ENCODE measurements at regions of chr1 and their contacts with region 1.

Region 1: GRCh38 chr1:229848752-229849677 is 218.0 kb upstream of the GALNT2 start:
- DNase-seq: peak; percentile 28
- ATAC-seq: peak; percentile 41
- H3K4me3 ChIP-seq: no peak overlapping the region
- H3K4me3 Mint-ChIP-seq: no peak overlapping the region
- H3K27ac ChIP-seq: no peak overlapping the region
- H3K27ac Mint-ChIP-seq: no peak overlapping the region
- H3K4me1 ChIP-seq: peaks cover 20 to 24% of the 10 kb centered on the region in 2 donors
- H3K4me1 Mint-ChIP-seq: peaks cover 23% of the 10 kb centered on the region
- H3K27me3 ChIP-seq: no peaks in the 10 kb centered on the region
- H3K27me3 Mint-ChIP-seq: no peaks in the 10 kb centered on the region
- CTCF ChIP-seq: peak; percentile 42

Region 2: GRCh38 chr1:229836324-229836723 is 12.7 kb before region 1 on chr1:
- CTCF ChIA-PET with region 1: interaction called, 10 read pairs
- POLR2A ChIA-PET with region 1: no interaction called
- intact Hi-C with region 1: no loop called
- DNase-seq: no peak
- ATAC-seq: no peak
- H3K4me3 ChIP-seq: no peak overlapping the region
- H3K4me3 Mint-ChIP-seq: no peak overlapping the region
- H3K27ac ChIP-seq: no peak overlapping the region
- H3K27ac Mint-ChIP-seq: no peak overlapping the region
- H3K4me1 ChIP-seq: peaks cover 2 to 9% of the 10 kb centered on the region in 2 donors
- H3K4me1 Mint-ChIP-seq: peaks cover 5% of the 10 kb centered on the region
- H3K27me3 ChIP-seq: peaks cover 0 to 7% (median 0%) of the 10 kb centered on the region in 4 experiments
- H3K27me3 Mint-ChIP-seq: peaks cover 14% of the 10 kb centered on the region
- CTCF ChIP-seq: no peak

Region 3: GRCh38 chr1:230191079-230191804 is 342.2 kb after region 1 on chr1:
- CTCF ChIA-PET with region 1: no interaction called
- POLR2A ChIA-PET with region 1: no interaction called
- intact Hi-C with region 1: no loop called
- DNase-seq: peak; percentile 41
- ATAC-seq: peak; percentile 62
- H3K4me3 ChIP-seq: no peak overlapping the region
- H3K4me3 Mint-ChIP-seq: no peak overlapping the region
- H3K27ac ChIP-seq: peak overlapping the region in 1 of 2 donors; percentile 50
- H3K27ac Mint-ChIP-seq: peak overlapping the region; percentile 27
- H3K4me1 ChIP-seq: peaks cover 22 to 24% of the 10 kb centered on the region in 2 donors
- H3K4me1 Mint-ChIP-seq: peaks cover 35% of the 10 kb centered on the region
- H3K27me3 ChIP-seq: no peaks in the 10 kb centered on the region
- H3K27me3 Mint-ChIP-seq: no peaks in the 10 kb centered on the region
- CTCF ChIP-seq: no peak